GM18951 (cell line): ENCODE measurements at regions of chr10 and their contacts with region 1.

Region 1: DNA sequence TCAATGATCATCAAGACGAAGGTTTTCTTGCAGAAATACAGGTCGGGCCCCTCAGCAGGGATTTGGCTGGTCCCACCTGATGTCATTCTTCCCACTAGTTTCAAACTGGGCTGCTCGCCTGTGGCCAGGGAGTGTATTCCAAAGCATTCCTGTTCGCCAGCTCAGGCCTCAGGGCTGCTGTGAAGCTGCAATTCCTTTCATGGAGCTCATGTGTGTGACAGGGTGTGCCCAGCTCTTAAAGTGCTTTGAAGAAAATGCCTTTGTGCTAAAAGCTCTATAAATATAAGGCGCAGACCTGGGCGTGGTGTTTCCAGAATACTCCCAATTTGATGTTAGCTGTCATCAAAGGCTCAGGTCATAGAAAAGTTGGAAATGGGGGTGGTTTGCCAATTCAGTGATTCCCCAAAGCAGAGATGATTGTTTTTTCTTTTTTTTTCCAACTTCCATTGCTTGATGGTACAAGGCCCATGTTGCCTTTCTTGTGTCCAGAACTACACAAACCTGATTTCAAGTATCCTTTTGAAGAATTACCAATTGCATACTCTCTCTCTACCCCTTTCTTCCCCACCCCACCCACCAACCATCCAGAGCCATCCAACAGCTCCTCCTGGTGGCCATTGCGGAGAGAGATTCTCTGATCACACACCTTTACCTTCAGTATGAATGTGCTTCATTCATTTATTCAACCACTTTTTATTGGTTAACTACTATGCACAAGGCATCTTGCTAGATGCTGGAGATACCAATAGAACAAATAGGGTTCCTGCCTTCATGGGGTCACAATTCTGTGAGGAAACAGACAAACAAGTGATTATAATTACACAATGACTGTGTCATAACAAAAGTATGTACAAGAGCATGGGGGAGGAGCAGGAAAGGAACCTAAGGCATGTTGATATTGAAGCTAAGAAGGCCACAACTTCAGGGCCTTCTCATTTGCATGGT is 297.3 kb upstream of the LYZL1 start:
- POLR2A ChIP-seq: no peak

Region 2: DNA sequence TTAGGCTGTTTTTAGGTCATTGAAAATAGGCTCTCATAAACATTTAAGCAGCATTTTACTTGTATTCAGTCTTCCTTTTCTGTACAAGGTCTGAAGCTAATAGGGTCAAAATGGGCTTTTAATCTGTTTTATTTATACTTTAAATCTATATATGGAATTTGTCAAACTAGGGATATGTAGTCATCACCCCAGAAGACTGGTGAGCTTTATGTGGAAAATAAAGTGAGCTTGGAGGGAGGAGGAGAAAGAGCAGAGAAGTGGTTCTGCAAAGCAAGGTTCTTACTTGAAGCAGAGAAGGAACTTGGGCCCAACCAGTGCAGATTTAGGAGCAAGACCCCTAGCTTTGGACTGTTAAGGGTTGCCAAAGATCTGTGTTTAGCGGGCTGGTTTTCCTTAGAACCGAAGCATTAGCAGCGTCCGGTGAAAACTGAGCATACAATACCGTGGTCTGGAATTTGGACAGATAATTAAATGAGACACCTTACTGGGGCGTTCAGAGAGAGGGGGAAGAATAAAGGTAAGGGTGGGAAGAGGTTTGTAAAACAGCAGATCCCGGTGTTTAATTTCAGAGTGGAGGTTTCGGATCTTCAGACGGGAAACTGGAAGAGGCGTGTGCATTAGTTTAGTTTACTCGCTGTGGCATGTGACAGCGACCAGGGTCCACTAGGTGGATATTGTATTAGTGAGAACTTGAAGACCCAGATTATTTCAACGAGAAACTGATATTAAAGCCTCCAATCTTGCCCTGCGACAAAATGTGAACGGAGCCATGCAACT is 311.8 kb before region 1 on chr10:
- in situ Hi-C with region 1: loop called (anchors 5 kb)
- POLR2A ChIP-seq: no peak

Region 3: DNA sequence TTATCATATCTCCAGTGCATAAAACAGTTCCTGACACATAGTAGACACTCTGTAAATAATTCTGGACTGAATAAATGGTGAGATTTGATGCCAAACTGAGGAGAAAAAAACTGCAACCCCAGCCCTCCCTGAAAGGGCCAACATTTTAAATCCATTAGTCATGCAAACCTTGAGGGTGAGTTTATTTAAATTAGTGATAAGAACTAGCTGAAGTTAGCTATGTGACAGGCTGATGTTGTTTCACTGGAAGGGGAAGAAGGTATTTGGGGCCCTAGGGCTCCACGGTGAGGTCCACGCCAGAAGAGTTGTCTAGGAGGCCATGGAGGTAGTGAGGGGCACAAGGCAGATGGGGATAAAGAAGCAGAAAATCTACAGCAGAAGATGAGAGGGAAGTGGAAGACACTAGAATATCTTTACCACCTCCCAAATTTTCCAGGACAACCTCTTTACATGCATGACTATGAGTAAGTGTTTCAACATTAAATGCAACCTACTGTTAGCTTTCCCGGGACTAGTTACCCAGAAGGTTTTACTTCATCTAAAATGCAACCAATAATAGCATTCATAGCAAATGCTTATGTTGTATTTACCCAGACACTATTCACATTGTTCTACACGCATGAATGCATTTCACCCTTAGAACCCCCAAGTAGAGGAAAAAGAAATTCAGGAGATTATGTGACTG is 114.1 kb after region 1 on chr10:
- in situ Hi-C with region 1: no loop called
- POLR2A ChIP-seq: no peak